HEK293 (cell line): ENCODE measurements at regions of chr6 and their contacts with region 1.

Region 1: GRCh38 chr6:38997128-38997761 is 51.3 kb upstream of the GLP1R start:
- H3K4me3 ChIP-seq: no peak overlapping the region
- H3K27ac ChIP-seq: no peak overlapping the region
- H3K4me1 ChIP-seq: no peaks in the 10 kb centered on the region
- CTCF ChIP-seq: peak; percentile 42

Region 2: DNA sequence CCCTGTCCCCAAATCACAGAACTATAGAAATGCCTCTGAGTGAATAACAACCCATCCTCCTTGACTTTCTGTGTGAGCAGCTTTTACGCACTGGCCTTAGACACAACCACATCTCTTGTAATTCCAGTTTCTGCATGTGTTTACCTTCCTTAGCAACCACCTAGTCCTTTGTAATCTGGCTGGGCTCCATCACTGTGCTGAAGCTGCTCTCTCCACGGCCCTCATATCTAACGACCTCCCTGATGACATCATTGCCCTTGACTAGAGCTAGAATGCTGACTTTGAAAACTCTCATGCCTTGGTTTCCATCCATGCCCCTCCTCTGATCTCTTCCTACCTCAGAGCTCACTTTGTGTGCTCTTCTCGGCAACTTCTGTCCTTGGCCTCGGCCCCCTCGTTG is 20.9 kb after region 1 on chr6:
- CTCF ChIA-PET with region 1: interaction called, 18 read pairs
- POLR2A ChIA-PET with region 1: no interaction called
- H3K4me3 ChIP-seq: no peak overlapping the region
- H3K27ac ChIP-seq: no peak overlapping the region
- H3K4me1 ChIP-seq: no peaks in the 10 kb centered on the region
- CTCF ChIP-seq: no peak

Region 3: DNA sequence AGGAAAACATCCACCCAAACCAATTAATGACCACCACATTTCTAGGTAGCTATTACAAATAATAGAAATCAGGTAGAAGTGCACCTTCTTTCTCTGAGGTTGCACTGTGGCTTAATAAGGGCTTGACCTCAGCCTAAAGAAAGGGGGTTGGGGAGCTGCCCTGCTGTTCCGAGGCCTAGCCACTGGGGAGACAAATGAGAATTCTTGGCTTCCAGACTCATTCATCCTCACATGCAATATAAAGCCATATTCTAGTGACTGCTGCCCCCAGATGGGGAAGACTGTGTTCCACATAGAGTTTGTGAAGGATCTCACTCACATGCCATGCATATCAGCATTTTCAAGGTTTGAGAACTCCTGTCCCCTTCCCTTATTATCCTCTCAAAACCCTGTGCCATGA is 94.9 kb after region 1 on chr6:
- CTCF ChIA-PET with region 1: interaction called, 25 read pairs
- POLR2A ChIA-PET with region 1: no interaction called
- H3K4me3 ChIP-seq: no peak overlapping the region
- H3K27ac ChIP-seq: no peak overlapping the region
- H3K4me1 ChIP-seq: peaks cover 5% of the 10 kb centered on the region; the same call in 1 of the 2 replicates
- CTCF ChIP-seq: peak; percentile 83

Region 4: DNA sequence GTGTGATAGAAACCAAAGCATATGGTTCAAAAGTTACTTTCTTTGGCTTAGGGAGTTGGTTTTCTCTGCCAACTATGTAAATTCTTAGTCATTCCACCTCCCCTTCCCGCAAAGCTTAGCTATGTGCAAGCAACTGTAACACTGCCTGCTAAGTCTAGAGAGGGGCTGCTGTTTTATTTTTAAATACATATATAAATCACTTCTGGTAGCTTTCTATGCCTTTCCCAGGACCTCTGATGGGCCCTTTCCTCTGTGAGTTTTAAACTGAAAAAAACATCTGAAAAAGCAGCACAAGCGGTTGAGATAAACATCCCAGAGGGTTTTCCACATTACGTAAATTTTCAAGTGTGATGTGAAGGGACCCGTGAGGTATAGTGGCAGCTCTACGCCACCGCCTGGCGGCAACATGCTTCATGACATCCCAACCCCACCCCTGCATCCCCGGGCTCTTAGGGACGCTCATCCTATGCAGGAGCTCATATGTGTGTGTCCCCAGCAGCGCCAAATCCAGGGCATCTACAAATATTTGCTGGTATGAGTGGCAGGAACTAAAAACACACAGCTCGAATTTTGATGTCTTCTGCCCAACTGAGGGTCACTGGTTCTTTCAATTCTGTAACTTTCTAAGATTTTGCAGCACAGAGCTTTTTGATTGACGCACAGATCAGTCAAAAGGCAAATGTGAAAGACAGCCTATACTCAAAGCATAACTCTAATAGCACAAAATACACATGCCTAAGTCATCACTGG is 105.0 kb after region 1 on chr6:
- CTCF ChIA-PET with region 1: interaction called, 11 read pairs
- POLR2A ChIA-PET with region 1: no interaction called
- H3K4me3 ChIP-seq: no peak overlapping the region
- H3K27ac ChIP-seq: no peak overlapping the region
- H3K4me1 ChIP-seq: no peaks in the 10 kb centered on the region
- CTCF ChIP-seq: no peak

Region 5: DNA sequence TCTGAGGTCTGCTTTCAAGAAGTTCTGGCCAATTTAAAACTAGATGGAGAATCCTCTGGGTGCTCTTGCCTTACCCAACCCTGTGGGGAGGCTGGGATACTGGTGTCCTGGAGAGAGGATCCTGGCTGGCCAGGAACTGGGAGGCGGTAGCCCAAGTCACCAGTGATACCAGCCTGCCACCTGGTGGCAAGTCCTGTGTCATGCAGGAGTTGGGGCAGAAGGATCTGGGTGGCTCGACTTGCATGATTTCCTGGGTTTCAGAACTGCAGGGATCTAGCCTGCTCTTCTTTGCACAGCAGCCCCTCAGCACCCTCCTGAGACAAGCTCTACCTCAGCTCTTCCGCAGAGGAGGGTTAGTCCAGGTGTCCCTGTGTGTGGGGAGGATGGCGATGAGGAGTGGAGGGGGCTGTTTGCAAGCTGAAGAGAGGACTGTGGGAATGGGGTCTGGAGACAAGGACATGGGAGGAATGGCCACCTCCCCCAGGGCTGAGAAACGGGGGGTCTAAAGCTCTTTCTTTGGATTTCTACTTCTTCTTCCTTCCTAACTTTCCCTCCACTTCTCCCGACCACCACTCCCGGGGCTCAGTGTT is 312.8 kb after region 1 on chr6:
- CTCF ChIA-PET with region 1: interaction called, 34 read pairs
- POLR2A ChIA-PET with region 1: no interaction called
- H3K4me3 ChIP-seq: no peak overlapping the region
- H3K27ac ChIP-seq: no peak overlapping the region
- H3K4me1 ChIP-seq: no peaks in the 10 kb centered on the region
- CTCF ChIP-seq: peak; percentile 90